ENCODE measurements at regions of chr12 and their contacts with region 1.

Region 1: DNA sequence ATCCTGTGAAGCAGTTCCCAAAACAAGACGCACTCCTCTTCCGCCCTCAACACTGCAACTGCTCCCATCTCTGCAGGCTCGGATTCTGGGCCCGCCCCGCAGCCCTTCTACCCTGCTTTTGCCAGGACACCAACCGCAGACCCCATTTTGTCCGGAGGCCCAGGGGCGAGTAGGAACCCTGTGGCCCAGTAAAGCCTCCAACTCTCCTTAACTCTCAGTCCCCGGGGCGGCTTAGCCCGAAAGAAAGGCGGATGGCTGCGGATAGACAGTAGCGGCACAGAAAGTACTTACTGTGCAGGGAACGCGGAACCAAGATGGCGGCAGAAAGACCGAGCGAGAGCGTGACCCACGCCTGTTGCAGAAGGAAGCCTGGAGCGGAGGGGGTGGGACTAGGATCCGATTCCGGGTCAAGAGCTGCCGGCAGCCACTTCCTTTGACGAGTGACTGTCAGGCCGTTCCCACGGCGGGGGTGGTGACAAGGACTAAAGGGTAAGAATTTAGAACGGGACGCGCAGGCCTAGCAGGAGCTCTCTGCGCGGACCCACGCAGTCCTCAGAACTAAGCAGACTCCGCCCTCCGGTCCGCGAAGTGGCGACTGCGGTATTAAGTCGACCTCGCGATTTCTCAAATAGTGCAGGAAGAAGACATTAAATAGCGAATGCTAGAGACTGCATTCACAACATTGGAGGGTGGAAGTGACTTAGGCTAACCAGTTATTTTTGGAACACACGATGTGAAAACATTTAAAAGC is at the start of gene NACA:
- DNase-seq: peak; percentile 99
- H3K4me3 ChIP-seq: peak within 1 kb of the TSS; percentile 83 to 96 (median 86)
- H3K27ac ChIP-seq: peak within 1 kb of the TSS; percentile 91 to 95 (median 92)
- H3K4me1 ChIP-seq: peaks cover 42 to 51% (median 49%) of the 10 kb centered on the region in 4 donors
- H3K27me3 ChIP-seq: no peaks in the 10 kb centered on the region
- CTCF ChIP-seq: peak in 1 of 3 experiments; percentile 9
- EP300 ChIP-seq: no peak
- POLR2A ChIP-seq: peak; percentile 96
- total RNA-seq, gene NACA: 913 to 1,477 (median 1,221) TPM

Region 2: GRCh38 chr12:56571126-56571525 is 154.0 kb before region 1 on chr12:
- intact Hi-C with region 1: no loop called
- DNase-seq: no peak
- H3K4me3 ChIP-seq: no peak overlapping the region
- H3K27ac ChIP-seq: peak overlapping the region; percentile 30 to 66 (median 42)
- H3K4me1 ChIP-seq: peaks cover 39 to 48% (median 44%) of the 10 kb centered on the region in 4 donors
- H3K27me3 ChIP-seq: no peaks in the 10 kb centered on the region
- CTCF ChIP-seq: no peak
- EP300 ChIP-seq: no peak
- POLR2A ChIP-seq: no peak

Region 3: DNA sequence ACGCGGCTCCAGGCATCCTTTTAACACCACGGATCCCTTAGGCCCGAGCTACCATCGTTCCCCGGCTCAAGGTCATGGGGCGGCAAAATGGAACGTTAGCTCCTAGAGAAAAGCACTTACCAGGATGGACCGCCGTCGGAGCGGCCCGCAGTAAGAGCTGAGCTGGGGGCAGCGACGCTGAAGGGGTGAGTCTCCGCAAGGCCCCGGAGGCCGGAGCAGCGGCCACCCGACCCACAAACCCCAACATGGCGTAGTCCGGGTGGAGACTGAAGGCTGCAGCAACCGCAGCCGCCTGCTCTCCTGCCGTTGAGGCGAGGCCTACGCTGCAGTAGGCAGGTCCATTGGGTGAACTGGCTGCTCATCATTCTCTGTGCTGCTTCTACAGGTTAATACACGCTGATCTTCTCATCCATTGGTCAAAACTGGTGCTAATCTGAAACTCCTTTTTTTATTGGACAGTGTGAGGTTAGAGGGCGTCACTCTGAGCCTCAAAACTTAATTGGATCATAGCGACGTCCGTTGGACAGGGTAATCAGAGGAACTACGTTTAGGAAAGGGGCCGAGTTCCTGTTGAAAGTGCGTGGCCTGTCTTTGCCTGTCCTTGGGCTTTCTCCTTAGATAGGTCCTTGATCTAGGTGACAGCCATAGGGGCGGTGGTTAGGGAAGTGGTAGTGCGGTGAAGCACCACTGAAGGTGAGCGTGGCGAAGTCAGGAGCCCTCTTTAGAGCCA is 79.3 kb before region 1 on chr12 and contains the start of gene ATP5F1B:
- intact Hi-C with region 1: loop called (anchors 2 kb)
- DNase-seq: peak; percentile 98
- H3K4me3 ChIP-seq: peak within 1 kb of the TSS; percentile 61 to 98 (median 76)
- H3K27ac ChIP-seq: peak within 1 kb of the TSS; percentile 85 to 96 (median 90)
- H3K4me1 ChIP-seq: peaks cover 30 to 52% (median 47%) of the 10 kb centered on the region in 4 donors
- H3K27me3 ChIP-seq: no peaks in the 10 kb centered on the region
- CTCF ChIP-seq: peak in 1 of 3 experiments; percentile 39
- EP300 ChIP-seq: no peak
- POLR2A ChIP-seq: peak; percentile 96
- total RNA-seq, gene ATP5F1B: 383 to 465 (median 424) TPM

Region 4: DNA sequence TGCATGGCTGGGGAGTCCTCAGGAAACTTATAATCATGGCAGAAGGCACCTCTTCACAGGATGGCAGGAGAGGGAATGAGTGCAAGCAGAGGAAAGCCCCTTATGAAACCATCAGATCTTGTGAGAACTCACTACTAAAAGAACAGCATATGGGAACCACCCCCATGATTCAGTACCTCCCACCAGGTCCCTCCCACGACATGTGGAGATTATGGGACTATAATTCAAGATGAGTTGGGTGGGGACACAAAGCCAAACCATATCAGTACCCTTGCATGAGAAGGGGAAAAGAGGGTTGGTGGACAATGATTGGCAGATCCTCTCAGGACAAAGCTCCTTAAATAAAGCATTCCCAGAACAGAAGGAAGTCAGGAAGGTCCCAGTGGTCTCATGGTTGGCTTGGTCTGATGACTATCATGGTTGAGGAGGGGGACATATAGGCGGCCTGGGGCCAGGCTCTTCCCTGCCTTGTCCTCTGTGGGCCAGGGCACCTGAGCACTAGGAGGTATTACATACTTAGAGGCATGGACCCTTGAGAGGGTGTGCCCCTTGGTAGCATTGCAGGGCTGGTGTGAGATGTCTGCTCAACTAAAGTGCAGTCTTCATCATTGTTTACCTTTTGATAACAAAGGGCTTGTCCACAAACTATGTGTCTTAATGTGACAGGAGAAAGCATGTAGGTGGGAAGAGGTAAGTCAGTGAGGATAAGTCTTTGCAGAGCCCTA is 60.2 kb after region 1 on chr12:
- intact Hi-C with region 1: no loop called
- DNase-seq: no peak
- H3K4me3 ChIP-seq: no peak overlapping the region
- H3K27ac ChIP-seq: no peak overlapping the region
- H3K4me1 ChIP-seq: no peaks in the 10 kb centered on the region
- H3K27me3 ChIP-seq: no peaks in the 10 kb centered on the region
- CTCF ChIP-seq: no peak
- EP300 ChIP-seq: no peak
- POLR2A ChIP-seq: no peak